ENCODE measurements at regions of chr10 and their contacts with region 1.

Region 1: GRCh38 chr10:102917962-102918816 is at the start of gene CNNM2:
- DNase-seq: peak; percentile 100
- ATAC-seq: peak; percentile 90
- H3K4me3 Mint-ChIP-seq: peak within 1 kb of the TSS; percentile 86
- H3K27ac Mint-ChIP-seq: peak within 1 kb of the TSS; percentile 88
- H3K4me1 Mint-ChIP-seq: peaks cover 43% of the 10 kb centered on the region
- H3K27me3 Mint-ChIP-seq: peaks cover 18% of the 10 kb centered on the region
- CTCF ChIP-seq: no peak
- total RNA-seq, gene CNNM2: 23.5 to 28.0 TPM (median 27.0 TPM) in 3 replicates

Region 2: DNA sequence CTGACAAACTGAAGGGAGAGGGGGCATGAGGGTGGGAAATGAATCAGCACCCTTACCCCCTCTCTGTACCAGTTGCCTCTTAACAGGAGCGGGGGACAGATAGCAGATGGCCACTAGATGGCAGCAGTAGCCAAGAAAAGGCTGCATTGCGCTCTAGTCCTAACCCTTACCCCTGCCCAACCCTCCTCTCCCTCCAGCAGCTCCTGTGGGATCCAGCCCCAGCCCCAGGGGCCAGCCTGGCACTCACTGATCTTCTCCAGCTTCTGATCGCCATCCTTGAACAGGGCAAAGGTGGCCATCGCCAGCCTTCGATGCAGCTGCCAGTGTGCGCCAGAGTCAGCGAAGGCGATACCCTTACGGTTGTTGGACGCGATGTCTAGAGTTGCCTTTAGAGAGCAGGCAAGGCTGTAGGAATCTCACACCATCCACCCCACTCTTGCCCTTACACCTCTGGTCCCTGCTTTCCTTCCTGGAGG is 83.1 kb before region 1 on chr10:
- CTCF ChIA-PET with region 1: interaction called, 22 read pairs
- POLR2A ChIA-PET with region 1: no interaction called
- DNase-seq: peak; percentile 89
- ATAC-seq: peak; percentile 99
- H3K4me3 Mint-ChIP-seq: no peak overlapping the region
- H3K27ac Mint-ChIP-seq: no peak overlapping the region
- H3K4me1 Mint-ChIP-seq: 0 out of 2 replicates have a peak, but pooled peaks cover 5% of the 10 kb centered on the region
- H3K27me3 Mint-ChIP-seq: peaks cover 18% of the 10 kb centered on the region
- CTCF ChIP-seq: peak; percentile 89

Region 3: GRCh38 chr10:102869258-102870198 is 48.7 kb before region 1 on chr10 and contains the start of gene AS3MT:
- CTCF ChIA-PET with region 1: interaction called, 12 read pairs
- POLR2A ChIA-PET with region 1: interaction called, 4 read pairs
- DNase-seq: peak; percentile 84
- ATAC-seq: peak; percentile 97
- H3K4me3 Mint-ChIP-seq: peak within 1 kb of the TSS; percentile 96
- H3K27ac Mint-ChIP-seq: peak within 1 kb of the TSS; percentile 84; the same call in 1 of the 2 replicates
- H3K4me1 Mint-ChIP-seq: peaks cover 16% of the 10 kb centered on the region
- H3K27me3 Mint-ChIP-seq: peaks cover 12% of the 10 kb centered on the region
- CTCF ChIP-seq: no peak
- total RNA-seq, gene AS3MT: 8.8 to 10.4 TPM (median 9.3 TPM) in 3 replicates

Region 4: DNA sequence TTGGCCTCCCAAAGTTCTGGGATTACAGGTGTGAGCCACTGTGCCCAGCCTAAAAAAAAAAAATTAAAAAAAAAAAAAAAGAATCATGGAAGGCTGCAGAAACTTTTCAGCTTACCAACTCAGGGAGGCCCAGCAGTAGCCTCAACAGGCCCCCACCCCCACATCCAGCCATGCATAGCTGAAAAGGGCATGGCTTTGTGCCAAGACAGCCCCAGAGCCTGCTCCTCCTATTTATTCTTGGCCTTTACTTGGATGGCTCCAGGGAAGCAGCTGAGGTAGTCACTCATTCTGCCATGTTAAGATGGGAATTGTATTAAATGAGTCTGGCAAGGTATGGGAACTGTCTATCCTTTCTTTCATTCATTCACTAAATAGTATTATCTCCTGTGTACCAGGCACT is 13.8 kb before region 1 on chr10:
- CTCF ChIA-PET with region 1: interaction called, 12 read pairs
- POLR2A ChIA-PET with region 1: no interaction called
- DNase-seq: no peak
- ATAC-seq: no peak
- H3K4me3 Mint-ChIP-seq: no peak overlapping the region
- H3K27ac Mint-ChIP-seq: no peak overlapping the region
- H3K4me1 Mint-ChIP-seq: peaks cover 3% of the 10 kb centered on the region; the same call in 1 of the 2 replicates
- H3K27me3 Mint-ChIP-seq: no peaks in the 10 kb centered on the region
- CTCF ChIP-seq: no peak

Region 5: GRCh38 chr10:103062604-103063590 is 144.7 kb after region 1 on chr10:
- CTCF ChIA-PET with region 1: interaction called, 33 read pairs
- POLR2A ChIA-PET with region 1: interaction called, 5 read pairs
- DNase-seq: no peak
- ATAC-seq: peak; percentile 39; the same call in 1 of the 2 replicates
- H3K4me3 Mint-ChIP-seq: no peak overlapping the region
- H3K27ac Mint-ChIP-seq: no peak overlapping the region
- H3K4me1 Mint-ChIP-seq: peaks cover 9% of the 10 kb centered on the region
- H3K27me3 Mint-ChIP-seq: no peaks in the 10 kb centered on the region
- CTCF ChIP-seq: no peak

Region 6: DNA sequence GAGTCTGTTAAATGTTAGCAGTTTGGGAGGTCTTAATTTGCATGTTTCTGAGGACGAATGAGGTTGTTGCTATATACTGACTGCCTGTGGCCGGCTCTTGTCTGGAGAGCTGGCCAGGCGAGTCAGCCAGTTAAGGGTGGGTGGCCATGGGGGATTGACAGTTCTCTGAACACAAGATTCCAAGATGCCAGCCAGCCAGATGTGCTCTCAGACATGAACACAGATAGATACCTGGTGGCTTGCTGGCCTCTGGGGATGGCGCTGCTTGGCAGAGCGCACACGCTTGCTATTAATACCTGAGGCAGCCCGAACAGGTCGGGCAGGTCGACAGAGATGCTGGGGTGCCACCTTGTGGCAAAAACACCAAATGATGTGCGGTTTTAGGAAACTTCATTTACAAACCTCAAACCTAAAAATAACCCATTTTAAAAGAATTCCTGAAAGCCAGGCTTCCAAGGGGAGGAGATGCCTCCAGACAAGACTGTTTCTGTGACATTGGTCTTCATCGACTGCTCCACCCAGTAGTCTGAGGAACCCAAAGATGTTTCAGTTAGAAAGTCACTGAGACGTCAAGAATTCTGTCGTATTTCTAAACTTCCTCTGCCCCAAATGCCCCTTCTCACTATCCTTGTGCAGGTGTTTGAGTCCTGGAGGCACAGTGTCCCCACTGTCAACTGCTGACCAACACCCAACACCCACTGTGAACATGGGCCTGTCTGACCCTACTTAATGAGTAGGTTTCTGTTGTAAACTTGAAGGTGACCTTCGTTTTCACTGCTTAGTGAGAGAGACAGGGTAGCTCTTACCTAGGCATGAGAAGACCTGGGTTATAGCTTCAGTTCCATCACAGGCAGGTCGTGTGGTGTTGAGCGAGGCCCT is 151.5 kb after region 1 on chr10:
- CTCF ChIA-PET with region 1: interaction called, 33 read pairs
- POLR2A ChIA-PET with region 1: interaction called, 5 read pairs
- DNase-seq: peak; percentile 80
- ATAC-seq: peak; percentile 89
- H3K4me3 Mint-ChIP-seq: no peak overlapping the region
- H3K27ac Mint-ChIP-seq: no peak overlapping the region
- H3K4me1 Mint-ChIP-seq: peaks cover 6% of the 10 kb centered on the region; the same call in 1 of the 2 replicates
- H3K27me3 Mint-ChIP-seq: no peaks in the 10 kb centered on the region
- CTCF ChIP-seq: peak; percentile 58

Region 7: DNA sequence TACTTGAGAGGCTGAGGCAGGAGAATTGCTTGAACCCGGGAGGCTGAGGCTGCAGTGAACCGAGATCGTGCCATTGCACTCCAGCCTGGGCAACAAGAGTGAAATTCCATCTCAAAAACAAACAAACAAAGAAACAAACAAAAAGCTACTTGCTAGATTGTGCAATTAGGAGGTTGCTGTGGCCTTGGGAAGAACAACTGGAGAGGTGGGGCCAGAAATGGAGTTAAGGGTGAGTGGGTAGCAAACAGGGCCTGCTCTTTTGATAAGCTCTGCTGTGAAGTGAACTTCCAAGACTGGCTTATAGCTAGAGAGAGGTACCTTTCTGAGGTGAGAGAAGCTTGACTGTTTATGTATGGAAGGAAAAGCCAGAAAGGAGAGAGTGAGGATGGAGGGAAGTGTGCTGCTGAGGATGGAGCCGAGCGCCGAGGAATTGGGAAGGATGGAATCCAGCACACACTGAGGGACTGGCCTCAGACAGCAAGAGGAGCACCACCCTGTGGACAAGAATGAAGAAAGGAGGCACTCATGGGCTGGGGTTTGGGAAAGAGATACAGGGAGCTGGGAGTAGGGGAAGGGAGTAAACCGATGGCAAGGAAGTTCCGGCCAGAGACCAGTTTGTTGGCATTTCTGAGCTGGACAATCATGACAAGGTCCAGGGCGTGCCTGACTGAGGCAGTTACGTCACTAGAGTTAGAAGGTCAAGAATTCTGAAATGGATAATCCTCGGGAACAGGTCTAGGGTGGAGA is 320.5 kb after region 1 on chr10:
- CTCF ChIA-PET with region 1: interaction called, 50 read pairs
- POLR2A ChIA-PET with region 1: interaction called, 4 read pairs
- DNase-seq: peak; percentile 52
- ATAC-seq: peak; percentile 95
- H3K4me3 Mint-ChIP-seq: no peak overlapping the region
- H3K27ac Mint-ChIP-seq: peak overlapping the region; percentile 87
- H3K4me1 Mint-ChIP-seq: peaks cover 33% of the 10 kb centered on the region
- H3K27me3 Mint-ChIP-seq: no peaks in the 10 kb centered on the region
- CTCF ChIP-seq: no peak

Measured in WTC11 (cell line).